Mucosa of descending colon (tissue), 3 donors: ENCODE measurements at regions of chr3 and their contacts with region 1.

Region 1: GRCh38 chr3:124559881-124560574 is 170.2 kb upstream of the UMPS start:
- DNase-seq: peak in 2 of 3 donors; percentile 70 to 87
- ATAC-seq: peak; percentile 82
- H3K4me3 ChIP-seq: no peak overlapping the region
- H3K4me1 ChIP-seq: peaks cover 22% of the 10 kb centered on the region
- CTCF ChIP-seq: peak; percentile 68

Region 2: GRCh38 chr3:124032648-124033359 is 527.2 kb before region 1 on chr3:
- intact Hi-C with region 1: no loop called
- DNase-seq: peak; percentile 85 to 95 (median 88)
- ATAC-seq: peak; percentile 97
- H3K4me3 ChIP-seq: peak overlapping the region; percentile 54
- H3K4me1 ChIP-seq: peaks cover 4% of the 10 kb centered on the region
- CTCF ChIP-seq: peak; percentile 67

Region 3: DNA sequence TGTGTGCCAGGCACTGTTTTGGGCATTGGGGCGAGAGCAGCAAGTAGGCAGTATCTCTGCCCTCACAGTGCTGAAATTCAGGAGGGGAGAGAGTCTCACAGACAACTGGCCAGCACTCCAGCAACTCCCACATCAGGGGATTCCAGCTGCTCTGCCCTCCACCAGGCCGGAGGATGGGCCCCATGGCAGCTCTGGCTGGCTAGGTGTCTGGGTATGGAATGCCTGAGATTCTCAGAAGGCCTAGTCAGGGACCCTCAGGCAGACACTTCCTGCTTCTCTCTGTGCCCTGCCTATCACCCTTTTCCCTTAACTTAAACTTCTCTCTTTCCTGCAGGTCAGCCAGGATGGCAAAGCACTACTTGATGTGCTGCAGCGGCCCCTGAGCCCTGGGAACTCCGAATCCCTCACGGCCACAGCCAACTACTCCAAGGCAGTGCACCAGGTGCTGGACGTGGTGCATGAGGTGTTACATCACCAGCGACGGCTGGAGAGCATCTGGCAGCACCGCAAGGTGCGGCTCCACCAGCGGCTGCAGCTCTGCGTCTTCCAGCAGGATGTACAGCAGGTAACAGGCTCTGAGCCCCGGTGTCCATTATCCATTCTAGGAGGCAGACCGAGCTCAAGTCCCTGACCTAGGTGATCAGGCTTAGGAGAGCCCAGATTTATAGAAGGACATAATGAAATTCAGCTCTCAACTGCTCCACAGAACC is 225.9 kb before region 1 on chr3:
- intact Hi-C with region 1: no loop called
- DNase-seq: peak in 1 of 3 donors; percentile 40
- ATAC-seq: no peak
- H3K4me3 ChIP-seq: no peak overlapping the region
- H3K4me1 ChIP-seq: no peaks in the 10 kb centered on the region
- CTCF ChIP-seq: no peak

Region 4: DNA sequence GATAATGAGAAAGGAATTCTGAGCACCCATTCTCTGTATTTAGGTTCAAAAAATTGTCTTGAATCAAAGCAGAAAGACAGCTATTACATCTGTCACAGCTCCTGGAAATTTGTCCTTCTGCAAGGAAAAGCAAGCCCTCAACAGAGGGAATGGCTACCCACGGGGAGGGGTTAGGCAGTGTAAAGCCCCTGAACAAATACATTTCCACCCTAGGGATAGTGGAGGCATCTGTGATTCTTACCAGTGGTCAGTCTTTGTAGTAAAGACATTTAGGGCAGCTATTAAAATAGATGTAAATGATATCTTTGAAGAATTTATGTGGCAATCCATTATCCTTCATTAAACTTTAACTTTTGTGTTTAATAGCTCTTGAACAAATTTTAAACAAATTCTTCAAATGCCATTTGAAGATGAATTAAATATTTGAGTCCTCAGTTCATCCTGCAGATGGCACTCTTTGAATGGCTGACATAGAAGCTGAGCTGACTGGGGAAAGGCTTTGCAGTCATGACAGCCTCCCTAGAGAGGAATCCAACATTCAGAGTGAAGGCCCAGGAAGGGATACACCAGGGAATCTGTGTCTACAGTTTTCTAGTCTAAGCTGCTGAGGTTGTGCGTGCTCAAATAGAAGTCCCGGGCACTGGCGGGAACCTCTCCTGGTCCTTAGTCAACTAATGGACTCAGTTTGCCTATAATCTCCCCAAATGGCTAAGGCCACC is 208.4 kb before region 1 on chr3:
- intact Hi-C with region 1: loop called in 1 of 2 experiments (anchors 10 kb)
- DNase-seq: peak in 1 of 3 donors; percentile 50
- ATAC-seq: peak; percentile 76
- H3K4me3 ChIP-seq: no peak overlapping the region
- H3K4me1 ChIP-seq: no peaks in the 10 kb centered on the region
- CTCF ChIP-seq: no peak

Region 5: GRCh38 chr3:124688581-124689454 is 128.8 kb after region 1 on chr3:
- intact Hi-C with region 1: loop called (anchors 5 kb)
- DNase-seq: peak; percentile 60 to 93 (median 78)
- ATAC-seq: peak; percentile 93
- H3K4me3 ChIP-seq: no peak overlapping the region
- H3K4me1 ChIP-seq: no peaks in the 10 kb centered on the region
- CTCF ChIP-seq: peak; percentile 65

Region 6: DNA sequence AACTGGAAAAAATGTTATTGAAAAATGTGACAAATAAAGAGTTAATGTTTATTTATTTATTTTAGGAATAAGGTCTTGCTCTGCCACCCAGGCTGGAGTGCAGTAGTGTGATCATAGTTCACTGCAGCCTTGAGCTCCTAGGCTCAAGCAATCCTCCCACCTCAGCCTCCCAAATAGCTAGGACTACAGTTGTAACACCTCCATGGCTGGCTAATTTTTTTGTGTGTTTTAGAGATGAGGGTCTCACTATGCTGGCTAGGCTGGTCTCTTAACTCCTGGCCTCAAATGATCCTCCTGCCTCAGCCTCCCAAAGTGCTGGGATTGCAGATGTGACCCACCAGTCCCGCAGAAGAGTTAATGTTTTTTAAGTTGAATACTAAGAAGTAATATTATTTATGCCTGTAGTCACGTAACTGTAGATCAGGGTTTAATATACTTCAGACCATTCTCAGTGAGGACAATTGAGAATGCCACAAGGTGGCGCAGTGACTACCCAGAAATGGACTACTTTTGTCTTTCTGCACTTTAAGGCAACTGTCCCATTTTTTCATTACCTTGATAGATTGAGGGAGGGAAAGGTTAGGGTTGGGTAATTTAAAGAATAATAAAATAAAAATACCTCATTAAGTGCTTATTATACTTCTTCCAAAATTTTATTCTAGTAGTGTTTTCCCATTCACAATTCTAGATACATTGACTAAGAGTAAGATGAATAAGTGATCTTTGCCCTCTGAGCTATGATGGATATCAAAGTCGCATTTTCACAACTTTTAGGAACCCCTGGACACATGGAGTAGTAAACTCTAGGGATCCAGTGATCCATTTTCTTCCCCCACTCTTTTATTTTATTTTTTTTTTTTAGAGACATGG is 368.5 kb after region 1 on chr3:
- intact Hi-C with region 1: no loop called
- DNase-seq: peak in 1 of 3 donors; percentile 91
- ATAC-seq: peak; percentile 46
- H3K4me3 ChIP-seq: no peak overlapping the region
- H3K4me1 ChIP-seq: peaks cover 8% of the 10 kb centered on the region
- CTCF ChIP-seq: peak; percentile 44